IMR-90 (cell line): ENCODE measurements at regions of chr1 and their contacts with region 1.

Region 1: DNA sequence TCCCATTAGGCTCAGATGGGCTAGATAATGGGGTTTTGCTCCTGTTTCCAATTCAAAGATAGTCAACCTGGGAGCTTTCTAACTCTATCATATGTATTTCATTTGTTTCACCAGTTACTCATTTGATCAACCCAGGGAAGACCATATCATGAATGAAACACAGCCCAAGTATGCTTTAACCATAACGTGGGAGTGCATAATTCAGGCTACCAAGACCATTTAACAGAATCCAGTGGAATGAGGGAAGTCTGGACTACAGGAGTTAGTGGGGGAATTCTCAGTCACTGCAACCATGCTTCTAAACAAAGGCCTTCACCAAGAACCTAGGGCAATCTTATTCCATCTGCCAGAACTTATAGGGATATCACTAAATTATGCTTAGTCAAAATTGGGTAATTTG is 15.0 kb upstream of the SLC16A1 start:
- DNase-seq: peak; percentile 76
- ATAC-seq: peak; percentile 54
- H3K4me3 ChIP-seq: no peak overlapping the region
- H3K27ac ChIP-seq: no peak overlapping the region
- H3K4me1 ChIP-seq: no peaks in the 10 kb centered on the region; the same call in 1 of the 2 replicates
- H3K27me3 ChIP-seq: no peaks in the 10 kb centered on the region
- CTCF ChIP-seq: no peak
- POLR2A ChIP-seq: no peak
- RAD21 ChIP-seq: no peak

Region 2: GRCh38 chr1:112625696-112626095 is 345.3 kb before region 1 on chr1:
- CTCF ChIA-PET with region 1: no interaction called
- POLR2A ChIA-PET with region 1: no interaction called
- dilution Hi-C with region 1: no loop called
- in situ Hi-C with region 1: no loop called
- intact Hi-C with region 1: no loop called
- DNase-seq: no peak
- ATAC-seq: no peak; the same call in 1 of the 2 replicates
- H3K4me3 ChIP-seq: no peak overlapping the region
- H3K27ac ChIP-seq: no peak overlapping the region
- H3K4me1 ChIP-seq: peaks cover 2% of the 10 kb centered on the region; the same call in 1 of the 2 replicates
- H3K27me3 ChIP-seq: no peaks in the 10 kb centered on the region
- CTCF ChIP-seq: no peak
- POLR2A ChIP-seq: no peak
- RAD21 ChIP-seq: no peak

Region 3: DNA sequence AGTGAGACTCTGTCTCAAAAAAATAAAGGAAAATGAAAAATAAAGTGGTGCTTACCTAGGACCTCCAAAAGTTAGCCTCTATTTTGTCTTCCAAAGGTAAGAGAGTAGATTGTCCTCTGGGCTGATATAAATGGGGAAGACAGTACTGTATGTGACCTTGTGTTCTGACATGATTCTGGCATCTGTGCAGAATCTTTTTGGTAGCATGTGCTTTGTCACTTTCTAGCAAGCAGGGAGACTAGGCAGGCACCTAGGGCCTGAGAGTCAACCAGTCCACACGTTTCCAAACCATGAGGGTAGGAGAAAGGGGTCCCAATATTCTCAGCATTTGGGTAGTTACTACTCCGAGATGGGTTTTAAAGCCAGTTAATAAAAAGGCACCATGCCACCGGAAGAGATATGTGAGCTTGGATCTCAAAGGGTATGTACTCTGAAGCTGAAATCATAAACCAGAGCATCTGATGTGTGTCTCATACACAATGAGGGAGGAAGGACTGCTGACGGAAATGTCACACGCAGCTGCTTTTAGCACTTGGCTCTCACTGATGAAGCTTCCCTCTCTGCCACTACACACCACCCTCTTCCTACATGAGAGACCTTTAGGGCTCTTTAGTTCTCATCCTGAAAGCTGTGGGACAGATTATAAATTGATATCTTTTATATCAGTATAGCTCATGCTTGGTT is 12.0 kb after region 1 on chr1:
- CTCF ChIA-PET with region 1: interaction called, 10 read pairs
- POLR2A ChIA-PET with region 1: no interaction called
- dilution Hi-C with region 1: no loop called
- in situ Hi-C with region 1: no loop called
- intact Hi-C with region 1: no loop called
- DNase-seq: no peak
- ATAC-seq: no peak
- H3K4me3 ChIP-seq: no peak overlapping the region
- H3K27ac ChIP-seq: no peak overlapping the region
- H3K4me1 ChIP-seq: no peaks in the 10 kb centered on the region
- H3K27me3 ChIP-seq: no peaks in the 10 kb centered on the region
- CTCF ChIP-seq: no peak
- POLR2A ChIP-seq: no peak
- RAD21 ChIP-seq: no peak